ENCODE measurements at regions of chr2 and their contacts with region 1.

Region 1: DNA sequence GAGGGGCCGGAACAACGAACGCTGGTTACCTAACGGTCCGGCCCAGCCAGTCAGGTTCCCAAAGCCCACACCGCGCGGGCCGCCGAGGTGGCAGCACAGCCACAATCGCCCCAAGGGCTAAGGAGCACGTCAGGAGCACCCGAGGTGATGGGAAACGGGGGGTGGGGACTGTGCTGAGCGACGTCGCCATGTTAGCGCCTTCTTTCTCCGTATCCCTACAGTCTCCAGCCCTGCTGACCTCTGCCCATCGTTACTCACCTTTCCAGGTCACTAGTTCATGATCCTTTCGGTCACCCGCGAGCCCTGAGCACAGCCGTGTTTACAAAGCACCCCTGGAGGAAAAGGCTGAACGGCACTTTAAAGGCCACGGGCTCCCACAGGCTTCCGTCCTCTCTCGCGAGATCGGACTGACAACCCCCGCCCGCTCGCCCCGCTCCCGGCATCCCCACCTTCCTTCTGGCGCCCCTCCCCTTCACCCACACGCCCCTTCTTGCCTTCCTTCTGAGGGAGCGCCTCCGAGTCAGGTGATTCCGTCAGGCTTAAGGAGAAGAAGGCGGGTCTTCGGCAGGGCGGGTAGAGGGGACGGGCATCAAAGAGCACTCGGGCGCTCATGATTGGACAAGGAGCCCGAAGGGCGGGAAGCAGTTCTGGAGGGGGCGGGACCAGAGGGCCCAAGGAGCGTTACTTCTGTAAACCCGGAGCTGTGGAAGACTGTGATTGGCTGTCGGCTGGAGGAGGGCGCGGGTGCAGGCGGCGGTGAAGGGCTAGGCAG is at the start of gene ATF2:
- DNase-seq: peak; percentile 99
- H3K4me3 Mint-ChIP-seq: peak within 1 kb of the TSS; percentile 99
- H3K27ac Mint-ChIP-seq: peak within 1 kb of the TSS; percentile 97
- H3K4me1 Mint-ChIP-seq: peaks cover 43% of the 10 kb centered on the region
- H3K27me3 Mint-ChIP-seq: no peaks in the 10 kb centered on the region
- total RNA-seq, gene ATF2: 48.0 to 53.3 TPM

Region 2: DNA sequence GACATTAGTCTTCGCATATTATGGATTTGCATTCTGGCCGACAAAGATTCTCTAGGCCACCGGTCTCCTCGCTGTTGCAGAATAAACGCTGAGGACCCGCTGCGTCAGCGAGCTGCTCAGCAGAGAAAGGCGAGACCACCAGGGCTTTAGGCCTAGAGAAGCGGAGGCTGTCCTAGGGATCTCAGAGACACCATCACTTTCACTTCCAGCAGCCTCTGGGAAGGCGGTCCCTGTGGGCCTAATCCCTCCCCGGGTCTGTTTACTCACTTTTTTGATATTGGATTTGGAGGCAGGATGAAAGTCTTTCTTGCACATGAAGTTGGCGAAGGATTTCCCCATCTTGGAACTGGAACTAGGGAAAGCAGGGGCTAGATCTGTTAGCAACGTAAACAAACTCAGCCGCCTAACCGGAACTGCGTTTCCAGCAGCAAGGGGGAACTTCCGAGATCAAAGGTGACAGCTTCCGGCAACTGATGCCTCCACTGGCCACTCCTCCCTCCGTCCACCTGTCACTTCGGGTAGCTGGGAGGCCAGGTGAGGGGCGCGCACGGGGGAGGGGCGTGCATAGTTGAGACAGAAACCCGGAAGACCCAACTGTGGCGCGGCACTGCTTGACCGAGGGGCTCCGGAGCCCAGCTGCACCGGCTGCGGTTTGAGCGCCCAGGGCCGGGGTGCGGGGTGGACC is 772.6 kb before region 1 on chr2 and contains the start of gene SCRN3:
- CTCF ChIA-PET with region 1: no interaction called
- intact Hi-C with region 1: loop called (anchors 1 kb)
- DNase-seq: peak; percentile 88
- H3K4me3 Mint-ChIP-seq: peak within 1 kb of the TSS; percentile 99
- H3K27ac Mint-ChIP-seq: peak within 1 kb of the TSS; percentile 99
- H3K4me1 Mint-ChIP-seq: peaks cover 38% of the 10 kb centered on the region
- H3K27me3 Mint-ChIP-seq: no peaks in the 10 kb centered on the region
- total RNA-seq, gene SCRN3: 10.7 to 12.3 TPM

Region 3: GRCh38 chr2:174593574-174594203 is 574.3 kb before region 1 on chr2:
- CTCF ChIA-PET with region 1: no interaction called
- intact Hi-C with region 1: loop called (anchors 2 kb)
- DNase-seq: peak; percentile 87
- H3K4me3 Mint-ChIP-seq: peak overlapping the region; percentile 77
- H3K27ac Mint-ChIP-seq: peak overlapping the region; percentile 99
- H3K4me1 Mint-ChIP-seq: peaks cover 52% of the 10 kb centered on the region
- H3K27me3 Mint-ChIP-seq: no peaks in the 10 kb centered on the region

Region 4: GRCh38 chr2:174778085-174778981 is 389.6 kb before region 1 on chr2:
- CTCF ChIA-PET with region 1: no interaction called
- intact Hi-C with region 1: loop called (anchors 1 kb)
- DNase-seq: peak; percentile 92
- H3K4me3 Mint-ChIP-seq: no peak overlapping the region
- H3K27ac Mint-ChIP-seq: peak overlapping the region; percentile 70
- H3K4me1 Mint-ChIP-seq: peaks cover 45% of the 10 kb centered on the region
- H3K27me3 Mint-ChIP-seq: no peaks in the 10 kb centered on the region

Region 5: GRCh38 chr2:175111200-175111657 is 56.7 kb before region 1 on chr2:
- CTCF ChIA-PET with region 1: interaction called, 3 read pairs
- intact Hi-C with region 1: loop called (anchors 1 kb)
- DNase-seq: no peak
- H3K4me3 Mint-ChIP-seq: no peak overlapping the region
- H3K27ac Mint-ChIP-seq: no peak overlapping the region
- H3K4me1 Mint-ChIP-seq: peaks cover 3% of the 10 kb centered on the region
- H3K27me3 Mint-ChIP-seq: no peaks in the 10 kb centered on the region

Region 6: DNA sequence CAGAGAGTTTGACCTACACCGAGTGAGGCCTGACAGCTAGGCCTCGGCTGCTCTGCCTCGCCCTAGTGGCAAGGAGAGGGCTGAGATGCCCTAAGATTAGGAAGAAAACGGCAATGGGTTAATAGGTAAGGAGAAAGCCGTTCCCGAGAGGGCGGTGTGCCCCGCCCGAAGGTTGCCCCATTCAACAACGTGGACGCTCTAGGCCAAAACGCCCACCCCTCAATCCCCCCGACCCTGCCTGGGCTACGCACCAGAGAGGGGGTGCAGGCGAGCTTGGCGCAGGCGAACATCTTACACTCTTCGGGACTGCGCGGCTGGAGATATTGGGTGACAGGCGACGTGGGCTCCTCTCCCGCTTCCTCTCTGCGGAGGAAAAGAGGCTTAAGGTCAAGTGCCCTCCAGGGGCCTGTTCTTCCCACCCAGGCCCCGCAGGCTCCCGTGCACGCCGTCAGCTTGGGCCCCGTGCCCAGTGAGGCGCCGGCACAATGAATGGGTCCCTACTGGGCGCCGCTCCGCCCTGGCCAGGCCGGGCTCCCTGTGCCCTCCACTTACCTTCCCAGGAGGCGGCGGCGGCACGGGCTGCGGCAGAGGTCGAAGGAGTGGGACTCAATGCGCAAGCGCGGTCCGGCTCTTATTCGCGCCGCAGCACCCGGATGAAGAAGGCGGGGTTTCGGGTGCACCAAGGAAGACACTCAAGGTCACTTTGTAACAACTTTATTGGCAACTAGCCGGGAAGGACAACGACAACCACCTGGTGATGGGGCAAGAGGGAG is 13.3 kb after region 1 on chr2 and contains the start of gene ATP5MC3:
- CTCF ChIA-PET with region 1: interaction called, 4 read pairs
- intact Hi-C with region 1: loop called (anchors 1 kb)
- DNase-seq: peak; percentile 95
- H3K4me3 Mint-ChIP-seq: peak within 1 kb of the TSS; percentile 94
- H3K27ac Mint-ChIP-seq: peak within 1 kb of the TSS; percentile 85
- H3K4me1 Mint-ChIP-seq: peaks cover 29% of the 10 kb centered on the region
- H3K27me3 Mint-ChIP-seq: no peaks in the 10 kb centered on the region
- total RNA-seq, gene ATP5MC3: 308 to 310 TPM